MCF 10A (cell line): ENCODE measurements at regions of chr21 and their contacts with region 1.

Region 1: GRCh38 chr21:39633770-39634181 is 21.0 kb downstream of the B3GALT5 start:
- DNase-seq: peak; percentile 51
- H3K4me3 Mint-ChIP-seq: peak overlapping the region; percentile 17
- H3K27ac Mint-ChIP-seq: peak overlapping the region; percentile 80
- H3K4me1 Mint-ChIP-seq: peaks cover 43% of the 10 kb centered on the region
- H3K27me3 Mint-ChIP-seq: no peaks in the 10 kb centered on the region
- CTCF ChIP-seq: no peak

Region 2: GRCh38 chr21:39307466-39307865 is 326.3 kb before region 1 on chr21:
- CTCF ChIA-PET with region 1: no interaction called
- POLR2A ChIA-PET with region 1: no interaction called
- intact Hi-C with region 1: no loop called
- DNase-seq: no peak
- H3K4me3 Mint-ChIP-seq: no peak overlapping the region
- H3K27ac Mint-ChIP-seq: no peak overlapping the region
- H3K4me1 Mint-ChIP-seq: peaks cover 9% of the 10 kb centered on the region
- H3K27me3 Mint-ChIP-seq: no peaks in the 10 kb centered on the region
- CTCF ChIP-seq: no peak

Region 3: GRCh38 chr21:39527664-39528381 is 106.0 kb before region 1 on chr21:
- CTCF ChIA-PET with region 1: interaction called, 13 read pairs
- POLR2A ChIA-PET with region 1: interaction called, 3 read pairs
- intact Hi-C with region 1: no loop called
- DNase-seq: no peak
- H3K4me3 Mint-ChIP-seq: no peak overlapping the region
- H3K27ac Mint-ChIP-seq: no peak overlapping the region
- H3K4me1 Mint-ChIP-seq: peaks cover 19% of the 10 kb centered on the region
- H3K27me3 Mint-ChIP-seq: peaks cover 16% of the 10 kb centered on the region
- CTCF ChIP-seq: no peak